Activated CD8-positive, alpha-beta T cell treated with anti-CD3 and anti-CD28 coated beads for 36 hours (primary cell): ENCODE measurements at regions of chr1 and their contacts with region 1.

Region 1: DNA sequence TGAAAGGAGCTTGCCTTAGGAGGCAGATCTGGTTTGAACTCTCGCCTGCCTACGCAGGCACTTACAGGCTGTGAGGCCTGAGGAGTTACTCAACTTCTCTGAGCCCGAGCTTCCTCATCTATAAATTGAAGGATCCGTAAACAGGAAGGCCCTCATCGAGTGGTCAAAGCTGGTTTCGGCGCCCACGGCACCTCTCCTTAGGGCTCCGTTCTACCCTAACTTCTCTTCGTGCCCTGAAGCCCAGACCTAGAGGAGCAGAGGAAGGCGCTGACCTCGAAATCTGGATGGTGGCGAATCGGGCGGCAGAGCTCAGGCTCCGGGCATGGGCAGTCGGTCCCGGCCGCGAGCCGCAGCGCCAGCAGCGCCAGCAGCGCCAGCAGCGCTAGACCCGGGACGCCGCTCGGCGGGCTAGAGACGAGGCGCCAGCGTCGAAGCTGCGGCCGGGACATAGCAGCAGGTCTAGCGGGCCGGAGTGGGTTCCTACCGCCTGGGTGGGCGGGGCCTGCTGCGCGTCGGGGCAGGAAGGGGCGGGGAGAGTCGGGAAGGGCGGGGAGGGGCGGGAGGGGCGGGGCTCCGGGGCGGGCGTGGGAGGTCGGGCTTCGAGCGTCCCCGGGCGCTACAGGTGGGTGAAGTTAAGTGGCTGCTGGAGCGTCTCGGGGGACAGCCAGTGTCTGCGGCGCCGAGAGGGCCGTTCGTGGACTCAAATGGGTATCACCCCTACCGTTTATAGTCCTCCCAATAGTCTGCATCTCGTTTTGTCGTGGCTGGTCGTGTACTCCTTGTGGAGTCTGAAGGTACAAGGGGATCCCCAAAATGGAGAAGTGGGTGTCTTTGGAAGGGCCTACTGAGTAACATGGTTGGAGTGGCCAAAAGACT is at the start of gene CTBS:
- DNase-seq: peak; percentile 89
- ATAC-seq: peak; percentile 89
- H3K4me3 Mint-ChIP-seq: peak within 1 kb of the TSS; percentile 98
- H3K27ac Mint-ChIP-seq: peak within 1 kb of the TSS; percentile 99
- H3K4me1 Mint-ChIP-seq: peaks cover 38% of the 10 kb centered on the region
- H3K27me3 Mint-ChIP-seq: no peaks in the 10 kb centered on the region
- CTCF ChIP-seq: no peak
- total RNA-seq, gene CTBS: 13.5 to 18.3 TPM

Region 2: GRCh38 chr1:84598846-84599741 is 24.9 kb after region 1 on chr1:
- CTCF ChIA-PET with region 1: no interaction called
- POLR2A ChIA-PET with region 1: interaction called, 10 read pairs
- intact Hi-C with region 1: no loop called
- DNase-seq: no peak
- ATAC-seq: peak; percentile 85
- H3K4me3 Mint-ChIP-seq: no peak overlapping the region
- H3K27ac Mint-ChIP-seq: peak overlapping the region; percentile 66
- H3K4me1 Mint-ChIP-seq: peaks cover 22% of the 10 kb centered on the region
- H3K27me3 Mint-ChIP-seq: no peaks in the 10 kb centered on the region
- CTCF ChIP-seq: no peak